ENCODE measurements at regions of chr12 and their contacts with region 1.

Region 1: GRCh38 chr12:131454418-131455217 is 256.3 kb upstream of the SFSWAP start:
- H3K4me3 Mint-ChIP-seq: no peak overlapping the region
- H3K27ac Mint-ChIP-seq: no peak overlapping the region
- H3K4me1 Mint-ChIP-seq: peaks cover 21% of the 10 kb centered on the region
- H3K27me3 Mint-ChIP-seq: peaks cover 22% of the 10 kb centered on the region

Region 2: GRCh38 chr12:130916251-130916911 is 538.2 kb before region 1 on chr12:
- intact Hi-C with region 1: loop called (anchors 10 kb)
- H3K4me3 Mint-ChIP-seq: no peak overlapping the region
- H3K27ac Mint-ChIP-seq: no peak overlapping the region
- H3K4me1 Mint-ChIP-seq: peaks cover 7% of the 10 kb centered on the region
- H3K27me3 Mint-ChIP-seq: peaks cover 31% of the 10 kb centered on the region

Region 3: DNA sequence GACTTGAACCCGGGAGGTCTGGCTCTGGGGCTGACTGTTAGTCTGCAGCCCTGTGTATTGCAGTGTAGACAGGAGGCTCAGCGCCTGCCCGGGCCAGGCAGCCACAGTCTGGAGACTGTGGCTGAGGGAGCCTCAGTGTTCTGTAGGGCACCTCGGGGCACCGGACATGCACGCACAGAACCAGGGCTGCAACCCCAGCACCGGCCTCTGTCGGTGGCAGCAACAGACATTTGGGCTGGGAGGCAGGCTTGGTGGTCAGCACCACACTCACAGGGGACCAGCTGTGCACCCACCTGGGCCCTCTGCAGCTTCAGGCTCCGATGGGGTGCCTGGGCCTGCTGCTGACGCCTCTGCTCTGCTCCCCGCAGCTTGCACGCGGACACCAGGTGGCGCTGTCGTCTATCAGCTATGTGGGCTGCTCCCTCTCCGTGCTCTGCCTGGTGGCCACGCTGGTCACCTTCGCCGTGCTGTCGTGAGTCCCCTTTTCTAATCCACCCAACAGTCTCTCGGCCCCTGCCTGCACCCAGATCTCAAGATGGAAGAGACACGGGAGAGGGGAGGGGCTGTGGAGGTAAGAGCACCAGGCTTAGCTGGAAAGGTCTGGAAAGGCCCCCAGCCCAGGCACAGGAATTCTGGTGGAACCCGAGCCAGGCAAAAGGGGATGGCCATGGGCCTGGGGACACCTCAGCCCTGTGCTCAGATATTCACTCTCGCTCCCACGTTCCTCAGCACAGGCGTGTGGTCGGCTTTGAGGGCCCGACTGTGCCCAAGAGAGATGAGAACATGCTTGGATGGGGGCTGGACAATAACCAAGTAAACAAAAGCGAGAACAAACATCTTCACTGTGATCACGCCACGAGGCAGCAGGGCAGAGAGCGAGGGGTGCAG is 349.9 kb before region 1 on chr12:
- intact Hi-C with region 1: loop called (anchors 2 kb)
- H3K4me3 Mint-ChIP-seq: no peak overlapping the region
- H3K27ac Mint-ChIP-seq: no peak overlapping the region
- H3K4me1 Mint-ChIP-seq: peaks cover 28% of the 10 kb centered on the region
- H3K27me3 Mint-ChIP-seq: peaks cover 23% of the 10 kb centered on the region

Region 4: DNA sequence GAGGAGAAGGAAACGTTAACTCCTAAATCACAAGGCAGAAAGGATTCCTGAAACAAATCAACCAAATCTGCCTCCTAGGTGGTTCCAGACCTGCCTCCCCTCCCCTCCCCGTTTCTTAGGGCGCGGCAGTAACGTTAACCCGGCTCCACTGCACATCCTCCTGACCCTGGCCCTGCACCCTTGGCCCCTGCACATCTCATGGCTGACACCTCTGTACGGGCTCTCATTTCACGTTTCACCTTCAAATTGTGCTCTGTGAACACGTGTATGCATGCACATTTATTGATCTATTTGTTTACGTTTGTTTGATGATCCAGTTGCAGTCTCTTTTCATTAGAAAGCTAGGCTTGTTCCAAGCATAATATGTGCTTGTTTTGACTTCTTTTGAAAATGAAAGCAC is 142.9 kb before region 1 on chr12:
- intact Hi-C with region 1: no loop called
- H3K4me3 Mint-ChIP-seq: no peak overlapping the region
- H3K27ac Mint-ChIP-seq: no peak overlapping the region
- H3K4me1 Mint-ChIP-seq: peaks cover 4% of the 10 kb centered on the region
- H3K27me3 Mint-ChIP-seq: peaks cover 21% of the 10 kb centered on the region